Astrocyte of the cerebellum (primary cell): ENCODE measurements at regions of chr5 and their contacts with region 1.

Region 1: GRCh38 chr5:62779010-62779422 is 200.4 kb downstream of the LRRC70 start:
- DNase-seq: peak; percentile 48
- H3K4me3 ChIP-seq: no peak overlapping the region
- CTCF ChIP-seq: peak; percentile 65

Region 2: GRCh38 chr5:62460578-62460983 is 318.4 kb before region 1 on chr5:
- in situ Hi-C with region 1: loop called (anchors 25 kb)
- DNase-seq: peak; percentile 35
- H3K4me3 ChIP-seq: no peak overlapping the region
- CTCF ChIP-seq: peak; percentile 75